Dorsolateral prefrontal cortex (tissue), 120 donors: ENCODE measurements at regions of chr11 and their contacts with region 1.

Region 1: DNA sequence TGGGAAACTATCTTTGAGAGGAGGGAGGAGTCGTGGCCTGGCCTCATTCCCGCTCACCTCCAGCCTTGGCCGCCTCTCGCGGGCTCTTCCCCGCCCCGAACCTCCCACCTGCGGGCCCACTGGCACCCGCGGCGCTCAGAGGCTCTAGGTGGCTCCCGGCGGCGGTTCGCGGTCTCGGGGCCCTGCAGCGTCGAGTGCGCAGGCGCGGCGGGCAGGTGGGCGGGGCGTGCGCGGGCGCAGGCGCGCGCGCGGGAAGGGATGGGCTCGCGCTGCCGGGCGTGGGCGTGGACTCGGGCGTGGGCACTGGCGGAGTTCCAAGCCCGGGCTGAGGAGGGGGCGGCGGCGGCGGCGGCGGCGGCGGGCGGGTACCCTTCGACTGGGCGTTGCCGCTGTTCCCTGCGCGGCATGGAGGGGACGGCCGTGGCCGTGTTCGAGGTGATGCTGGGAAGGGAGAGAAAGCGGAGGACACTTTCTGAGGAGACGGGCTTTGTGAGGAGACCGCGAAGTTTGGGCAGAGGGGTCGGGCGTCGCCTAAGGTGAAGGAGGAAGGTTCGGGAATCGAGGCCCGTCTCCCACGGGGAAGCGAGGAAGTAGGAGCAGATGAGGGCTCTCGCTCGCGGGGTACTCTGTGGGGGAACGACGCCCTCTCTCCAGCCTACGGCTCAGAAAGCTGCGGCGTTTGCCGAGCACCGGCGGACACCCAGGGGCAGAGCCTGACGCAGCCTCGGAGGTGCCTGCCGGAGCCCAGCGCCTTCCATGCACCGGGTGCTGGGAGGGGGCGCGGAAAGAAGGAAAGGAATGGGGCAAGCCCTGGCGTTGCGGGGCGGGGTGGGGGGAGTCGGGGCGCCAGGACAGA is 15.7 kb upstream of the SPTBN2 start:
- DNase-seq: peak; percentile 64 to 91 (median 78)
- H3K4me3 ChIP-seq: peak overlapping the region; percentile 78 to 100 (median 97)
- H3K27ac ChIP-seq: peak overlapping the region in 55 of 59 donors; percentile 16 to 97 (median 85)
- H3K27me3 ChIP-seq: no peaks in the 10 kb centered on the region
- CTCF ChIP-seq: peak in 22 of 56 donors; percentile 1 to 51 (median 15)

Region 2: DNA sequence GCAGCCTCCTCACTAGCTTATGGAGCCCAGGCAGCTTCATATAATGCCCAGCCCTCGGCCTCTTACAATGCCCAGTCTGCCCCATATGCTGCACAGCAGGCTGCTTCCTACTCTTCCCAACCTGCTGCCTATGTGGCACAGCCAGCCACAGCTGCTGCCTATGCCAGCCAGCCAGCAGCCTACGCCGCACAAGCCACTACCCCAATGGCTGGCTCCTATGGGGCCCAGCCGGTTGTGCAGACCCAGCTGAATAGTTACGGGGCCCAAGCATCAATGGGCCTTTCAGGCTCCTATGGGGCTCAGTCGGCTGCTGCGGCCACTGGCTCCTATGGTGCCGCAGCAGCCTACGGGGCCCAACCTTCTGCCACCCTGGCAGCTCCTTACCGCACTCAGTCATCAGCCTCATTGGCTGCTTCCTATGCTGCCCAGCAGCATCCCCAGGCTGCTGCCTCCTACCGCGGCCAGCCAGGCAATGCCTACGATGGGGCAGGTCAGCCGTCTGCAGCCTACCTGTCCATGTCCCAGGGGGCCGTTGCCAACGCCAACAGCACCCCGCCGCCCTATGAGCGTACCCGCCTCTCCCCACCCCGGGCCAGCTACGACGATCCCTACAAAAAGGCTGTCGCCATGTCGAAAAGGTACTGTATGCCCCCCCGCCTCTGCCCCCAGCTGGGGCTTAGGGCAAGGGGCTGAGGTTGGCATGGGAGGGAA is 119.5 kb before region 1 on chr11:
- intact Hi-C with region 1: loop called in 1 of 2 experiments (anchors 10 kb)
- DNase-seq: peak in 1 of 10 donors; percentile 62
- H3K4me3 ChIP-seq: no peak overlapping the region
- H3K27ac ChIP-seq: peak overlapping the region in 1 of 59 donors; percentile 83
- H3K27me3 ChIP-seq: no peaks in the 10 kb centered on the region
- CTCF ChIP-seq: no peak

Region 3: DNA sequence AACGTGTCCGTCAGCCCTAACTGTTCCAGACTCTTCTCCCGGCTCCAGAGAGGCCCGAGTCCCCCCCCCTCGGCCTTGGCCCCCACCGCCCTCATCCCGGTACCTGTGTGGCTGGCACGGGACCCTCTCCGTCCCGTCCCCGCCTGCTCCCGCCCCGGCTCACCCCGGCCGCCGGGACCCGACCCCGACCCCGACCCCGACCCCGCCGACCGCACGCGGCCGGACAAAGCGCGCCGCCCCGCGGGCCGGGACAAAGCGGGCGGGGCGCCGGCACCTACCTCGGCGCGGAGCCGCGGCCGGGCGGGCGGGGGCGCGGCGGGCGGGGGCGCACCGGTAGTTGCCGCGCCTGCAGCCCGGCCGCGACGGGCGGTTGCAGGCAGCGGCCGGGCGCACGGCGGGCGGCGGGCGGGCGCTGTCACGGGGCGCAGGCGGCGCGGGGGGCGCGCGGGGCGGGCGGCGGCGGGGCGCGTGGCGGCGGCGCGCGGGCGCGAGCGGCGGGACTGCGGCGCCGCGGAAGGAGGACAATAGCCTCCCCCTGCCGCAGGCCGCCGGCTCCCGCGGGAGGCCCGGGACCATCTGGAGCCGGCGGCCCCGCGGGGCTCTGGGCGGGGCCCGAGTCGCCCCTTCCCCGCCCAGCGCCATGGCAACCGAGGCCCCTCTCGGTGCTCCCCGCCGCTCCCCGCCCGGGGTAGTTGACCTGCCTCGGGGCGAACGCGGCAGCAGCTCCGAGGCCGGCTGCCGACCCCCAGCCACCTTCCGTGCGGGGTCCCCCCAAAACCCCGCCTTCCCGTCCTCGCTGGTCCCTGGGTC is 16.6 kb before region 1 on chr11:
- intact Hi-C with region 1: loop called in 1 of 2 experiments (anchors 1 kb)
- DNase-seq: no peak
- H3K4me3 ChIP-seq: peak overlapping the region; percentile 45 to 77 (median 66)
- H3K27ac ChIP-seq: peak overlapping the region in 58 of 59 donors; percentile 26 to 95 (median 86)
- H3K27me3 ChIP-seq: no peaks in the 10 kb centered on the region
- CTCF ChIP-seq: no peak